ENCODE measurements at regions of chr17 and their contacts with region 1.

Region 1: DNA sequence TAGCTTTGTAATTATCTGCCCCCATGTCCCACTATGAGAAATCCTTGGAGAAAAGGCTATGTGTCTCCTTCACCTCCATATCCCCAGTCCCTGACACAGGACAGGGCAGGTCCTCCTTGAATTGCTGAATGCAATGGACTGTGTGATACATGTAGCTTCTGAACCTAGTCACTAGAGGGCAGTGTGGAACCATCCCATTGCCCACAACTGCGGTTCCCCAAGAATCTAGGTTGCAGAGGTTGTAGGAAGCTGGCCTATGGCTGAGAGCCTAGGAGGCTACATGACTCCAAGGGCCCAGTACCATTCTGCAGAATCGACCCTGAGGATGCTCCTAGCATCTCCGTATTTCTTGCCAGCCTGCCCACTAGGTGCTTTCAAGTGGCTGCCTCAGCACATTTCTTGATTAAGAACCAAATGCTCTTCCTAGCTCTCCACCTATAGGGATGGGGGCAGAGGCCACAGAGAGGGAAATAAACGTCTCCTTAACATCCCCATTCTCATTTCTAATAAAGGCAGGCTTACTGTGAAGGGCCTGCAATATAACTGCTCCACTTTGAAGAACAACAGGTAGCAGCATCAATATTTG is 394.0 kb downstream of the CA10 start:
- DNase-seq: peak; percentile 47
- ATAC-seq: peak; percentile 79
- H3K4me3 Mint-ChIP-seq: no peak overlapping the region
- H3K27ac Mint-ChIP-seq: no peak overlapping the region
- H3K4me1 Mint-ChIP-seq: no peaks in the 10 kb centered on the region
- H3K27me3 Mint-ChIP-seq: peaks cover 19% of the 10 kb centered on the region
- CTCF ChIP-seq: peak; percentile 84

Region 2: GRCh38 chr17:51778842-51779241 is 14.4 kb after region 1 on chr17:
- CTCF ChIA-PET with region 1: interaction called, 14 read pairs
- POLR2A ChIA-PET with region 1: no interaction called
- intact Hi-C with region 1: no loop called
- DNase-seq: no peak
- ATAC-seq: no peak
- H3K4me3 Mint-ChIP-seq: no peak overlapping the region
- H3K27ac Mint-ChIP-seq: no peak overlapping the region
- H3K4me1 Mint-ChIP-seq: no peaks in the 10 kb centered on the region
- H3K27me3 Mint-ChIP-seq: peaks cover 9% of the 10 kb centered on the region
- CTCF ChIP-seq: no peak

Region 3: DNA sequence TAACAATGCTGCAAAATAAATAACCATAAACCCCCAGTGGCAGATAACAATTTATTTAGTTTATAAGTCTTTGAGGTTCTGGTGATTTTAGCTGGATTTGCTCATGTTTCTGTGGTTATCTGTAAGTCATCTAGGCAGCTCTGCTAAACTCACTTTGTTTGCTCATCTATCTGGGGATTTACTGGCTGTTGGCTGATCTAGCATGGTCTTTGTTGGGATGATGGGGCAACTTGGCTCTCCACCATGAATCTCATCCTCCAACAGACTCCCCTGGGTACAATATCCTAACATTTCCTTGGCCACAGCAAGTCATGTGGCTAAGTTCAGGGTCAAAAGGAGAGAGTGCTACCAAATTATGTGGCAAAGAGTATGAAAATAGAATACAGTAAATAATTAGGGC is 34.8 kb after region 1 on chr17:
- CTCF ChIA-PET with region 1: no interaction called
- POLR2A ChIA-PET with region 1: no interaction called
- intact Hi-C with region 1: no loop called
- DNase-seq: no peak
- ATAC-seq: no peak
- H3K4me3 Mint-ChIP-seq: no peak overlapping the region
- H3K27ac Mint-ChIP-seq: no peak overlapping the region
- H3K4me1 Mint-ChIP-seq: no peaks in the 10 kb centered on the region
- H3K27me3 Mint-ChIP-seq: peaks cover 2% of the 10 kb centered on the region
- CTCF ChIP-seq: no peak

Region 4: DNA sequence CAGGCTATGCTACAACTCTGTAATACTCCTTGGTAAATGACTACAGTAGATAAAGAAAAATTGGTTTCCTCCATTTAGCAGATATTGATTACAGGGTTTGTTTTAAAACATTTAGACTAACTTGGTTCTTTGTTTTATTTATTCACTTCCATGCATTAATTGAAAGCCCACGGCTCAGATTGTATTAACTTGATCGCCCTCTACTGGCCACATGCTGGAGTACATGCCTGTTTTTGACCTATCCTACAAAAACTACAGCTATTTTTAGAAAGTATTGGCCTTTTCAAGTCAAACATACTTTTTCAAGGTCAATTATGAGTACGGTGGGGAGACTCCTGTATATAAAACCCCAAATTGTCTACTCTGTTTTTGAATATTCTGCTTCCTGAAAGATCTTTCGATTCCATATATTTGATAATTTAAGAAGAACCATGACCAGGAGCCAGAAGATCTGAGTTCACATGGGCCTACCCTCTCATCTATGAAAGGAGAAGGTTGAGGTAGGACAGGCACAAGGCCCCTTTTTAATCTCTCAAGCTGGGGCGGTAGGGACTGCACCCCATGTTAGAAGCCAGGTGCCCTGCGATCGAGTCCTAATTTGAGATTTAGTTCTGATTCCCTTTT is 342.3 kb after region 1 on chr17:
- CTCF ChIA-PET with region 1: interaction called, 8 read pairs
- POLR2A ChIA-PET with region 1: no interaction called
- intact Hi-C with region 1: loop called (anchors 5 kb)
- DNase-seq: peak; percentile 65
- ATAC-seq: no peak
- H3K4me3 Mint-ChIP-seq: no peak overlapping the region
- H3K27ac Mint-ChIP-seq: no peak overlapping the region
- H3K4me1 Mint-ChIP-seq: no peaks in the 10 kb centered on the region
- H3K27me3 Mint-ChIP-seq: peaks cover 11% of the 10 kb centered on the region
- CTCF ChIP-seq: peak; percentile 89